WTC11 (cell line): ENCODE measurements at regions of chr11 and their contacts with region 1.

Region 1: DNA sequence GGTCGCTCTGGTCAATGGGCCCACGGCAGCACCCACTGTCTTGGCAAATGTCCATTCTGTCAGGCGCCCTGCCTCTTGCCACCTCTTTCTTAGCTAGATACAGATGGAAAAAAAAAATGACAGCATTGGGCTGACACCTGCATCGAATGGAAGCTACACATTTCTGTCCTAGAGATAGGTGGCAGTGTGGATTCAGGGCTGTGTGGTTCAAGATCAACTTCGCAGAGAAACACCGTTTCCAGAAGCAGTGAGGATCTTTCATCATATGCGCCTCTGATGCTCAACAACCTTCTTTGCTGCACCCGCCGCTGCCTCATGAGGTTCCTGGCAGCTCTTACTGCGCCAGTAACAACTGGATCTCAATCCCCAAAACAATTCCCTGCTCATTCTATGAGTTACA is 236.3 kb downstream of the KIRREL3 start:
- DNase-seq: no peak
- ATAC-seq: peak; percentile 62
- H3K4me3 Mint-ChIP-seq: no peak overlapping the region
- H3K27ac Mint-ChIP-seq: no peak overlapping the region
- H3K4me1 Mint-ChIP-seq: no peaks in the 10 kb centered on the region
- H3K27me3 Mint-ChIP-seq: no peaks in the 10 kb centered on the region; the same call in 1 of the 2 replicates
- CTCF ChIP-seq: no peak

Region 2: DNA sequence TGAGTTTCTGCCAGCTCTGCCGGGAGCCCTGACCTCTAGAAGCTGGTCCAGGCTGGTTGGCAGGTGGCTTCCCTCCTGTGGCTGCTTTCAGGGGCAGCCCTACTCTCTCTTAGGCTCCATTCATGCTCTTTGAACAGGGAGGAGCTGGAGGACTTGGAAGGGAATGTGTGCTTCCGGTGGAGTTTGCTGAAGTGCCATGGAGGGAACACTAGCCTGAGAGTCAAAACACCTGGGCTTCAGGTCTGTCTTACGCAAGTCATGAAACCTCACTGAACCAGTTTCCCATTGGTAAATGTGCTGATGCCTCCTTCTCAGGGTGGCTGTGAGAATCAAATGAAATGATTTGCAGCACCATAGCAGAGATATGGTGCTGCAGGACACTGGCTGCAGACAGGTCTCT is 11.9 kb after region 1 on chr11:
- CTCF ChIA-PET with region 1: interaction called, 12 read pairs
- POLR2A ChIA-PET with region 1: no interaction called
- DNase-seq: no peak
- ATAC-seq: no peak
- H3K4me3 Mint-ChIP-seq: no peak overlapping the region
- H3K27ac Mint-ChIP-seq: no peak overlapping the region
- H3K4me1 Mint-ChIP-seq: peaks cover 21% of the 10 kb centered on the region
- H3K27me3 Mint-ChIP-seq: no peaks in the 10 kb centered on the region
- CTCF ChIP-seq: no peak

Region 3: DNA sequence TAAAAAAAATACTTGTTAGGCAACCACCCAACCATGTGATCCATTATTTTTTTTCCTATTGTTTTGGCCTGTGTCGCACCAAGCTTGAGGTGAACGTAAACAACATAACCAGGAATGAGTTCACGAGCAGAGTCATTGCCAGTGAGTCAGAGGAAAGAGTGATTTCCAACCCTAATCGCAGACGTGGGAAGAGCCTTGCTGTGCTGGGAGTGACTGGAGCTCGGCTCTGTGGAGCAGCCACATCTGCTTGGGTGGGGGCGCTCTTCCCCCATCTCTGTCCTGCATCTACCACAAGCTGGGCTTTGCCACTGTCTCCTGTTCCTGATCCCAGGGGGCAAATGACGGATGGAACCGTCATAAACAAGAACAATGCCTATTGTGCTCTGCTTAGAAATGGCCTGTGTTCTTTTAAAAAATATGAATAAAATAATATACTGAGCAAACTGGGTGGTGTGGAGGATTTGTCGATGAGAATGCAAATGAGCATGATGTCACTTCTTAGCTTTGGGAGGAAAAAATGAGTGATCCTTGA is 26.4 kb after region 1 on chr11:
- CTCF ChIA-PET with region 1: no interaction called
- POLR2A ChIA-PET with region 1: no interaction called
- DNase-seq: peak; percentile 34
- ATAC-seq: peak; percentile 92
- H3K4me3 Mint-ChIP-seq: no peak overlapping the region
- H3K27ac Mint-ChIP-seq: no peak overlapping the region
- H3K4me1 Mint-ChIP-seq: peaks cover 27% of the 10 kb centered on the region
- H3K27me3 Mint-ChIP-seq: no peaks in the 10 kb centered on the region
- CTCF ChIP-seq: no peak